ENCODE measurements at regions of chr10 and their contacts with region 1.

Region 1: GRCh38 chr10:71569775-71570588 is 149.6 kb downstream of the C10orf105 start:
- DNase-seq: peak; percentile 74
- ATAC-seq: peak; percentile 72

Region 2: DNA sequence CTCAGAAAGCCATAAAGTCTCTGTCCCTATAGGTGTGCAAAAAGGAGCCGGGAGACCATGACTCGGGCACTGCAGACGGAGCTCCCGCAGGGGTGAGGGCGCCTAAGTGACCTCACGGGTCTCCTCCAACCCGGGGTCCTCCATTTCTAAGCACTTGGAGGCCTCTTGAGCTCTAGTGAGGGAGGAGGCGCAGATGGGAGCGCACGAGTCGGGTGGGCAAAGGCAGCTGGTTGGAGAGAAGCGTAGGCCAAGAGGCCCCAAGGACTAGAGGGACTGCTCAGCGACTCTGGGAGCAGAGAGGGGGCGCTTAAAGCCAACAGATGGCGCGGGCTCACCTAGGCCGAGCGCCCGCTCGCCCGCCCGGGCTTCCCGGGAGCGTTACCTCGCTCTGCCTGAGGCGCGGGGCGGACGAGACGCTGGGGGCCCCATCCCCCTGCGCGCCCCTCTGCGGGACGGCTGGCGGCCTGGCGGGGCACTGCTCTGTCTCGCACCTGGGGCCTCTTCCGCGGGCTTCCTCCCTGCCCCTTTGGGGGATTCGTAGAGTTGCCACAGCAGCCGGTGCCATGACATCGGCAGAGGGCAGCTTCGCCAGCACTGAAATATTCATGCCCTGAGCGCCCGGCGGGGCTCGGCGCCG is 173.8 kb before region 1 on chr10:
- intact Hi-C with region 1: loop called (anchors 10 kb)
- DNase-seq: peak; percentile 81
- ATAC-seq: peak; percentile 95

Measured in left ventricle myocardium superior (tissue), 1 donor.